ENCODE measurements at regions of chr15 and their contacts with region 1.

Region 1: DNA sequence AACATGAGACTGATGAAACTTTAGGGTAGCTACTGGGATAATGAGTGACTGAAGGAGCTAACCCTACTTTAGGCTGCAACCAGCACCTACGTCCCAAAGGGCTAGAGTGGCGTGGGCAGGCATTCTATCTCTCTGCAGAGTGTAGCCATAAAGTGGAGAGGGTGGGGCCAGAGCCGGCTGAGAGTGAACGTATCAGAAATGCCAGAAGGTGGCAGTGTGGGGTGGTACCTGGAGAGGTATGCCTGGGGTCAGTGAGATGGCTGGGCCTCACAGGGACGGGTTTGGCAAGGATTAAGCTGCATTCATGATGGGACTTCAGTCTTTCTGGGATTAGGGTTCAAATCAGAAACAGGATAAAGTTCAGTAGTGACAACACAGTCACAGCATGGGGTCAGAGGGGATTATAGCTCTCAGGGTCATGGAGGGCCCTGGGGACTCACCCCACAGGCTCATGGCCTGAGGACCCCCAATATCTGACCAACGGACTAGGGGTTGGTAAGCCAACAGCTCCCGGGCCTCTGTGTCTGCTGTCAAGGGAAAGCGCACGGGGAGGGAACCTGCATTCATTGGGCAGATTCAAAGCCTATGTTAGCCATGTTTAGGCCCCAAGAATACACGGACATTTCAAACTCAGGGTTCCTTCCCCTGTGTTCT is 86.5 kb upstream of the FOXB1 start:
- DNase-seq: peak; percentile 86
- H3K4me3 Mint-ChIP-seq: no peak overlapping the region
- H3K27ac Mint-ChIP-seq: no peak overlapping the region
- H3K4me1 Mint-ChIP-seq: peaks cover 28% of the 10 kb centered on the region
- H3K27me3 Mint-ChIP-seq: peaks cover 3% of the 10 kb centered on the region

Region 2: DNA sequence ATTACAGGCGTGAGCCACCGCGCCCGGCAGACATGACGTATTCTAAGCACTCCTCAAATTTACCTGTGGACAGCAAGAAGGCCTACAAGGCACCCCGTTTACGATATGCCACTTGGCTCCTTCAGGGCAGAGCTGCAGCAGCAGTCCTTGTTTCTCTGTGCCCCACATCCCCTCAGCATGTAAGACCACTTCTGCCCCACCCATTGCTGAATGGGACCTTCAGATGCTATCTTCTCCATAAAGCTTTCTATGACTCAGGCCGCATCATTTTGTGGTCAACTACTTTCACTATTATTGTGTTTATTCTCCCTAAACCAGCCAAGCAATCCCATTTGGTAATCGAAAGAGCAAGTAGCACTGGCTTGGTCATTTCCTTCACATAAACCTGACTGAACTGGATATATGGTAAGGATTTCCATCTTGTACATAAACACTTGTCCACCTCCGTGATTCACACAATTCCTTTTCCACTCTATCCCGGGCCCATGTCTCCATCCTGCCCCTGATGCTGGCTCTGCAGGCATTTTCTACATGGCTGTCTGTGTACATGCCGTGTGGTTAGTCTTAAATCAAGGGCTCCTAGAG is 1460.2 kb before region 1 on chr15:
- CTCF ChIA-PET with region 1: no interaction called
- intact Hi-C with region 1: no loop called
- DNase-seq: peak; percentile 34
- H3K4me3 Mint-ChIP-seq: no peak overlapping the region
- H3K27ac Mint-ChIP-seq: no peak overlapping the region
- H3K4me1 Mint-ChIP-seq: peaks cover 58% of the 10 kb centered on the region
- H3K27me3 Mint-ChIP-seq: no peaks in the 10 kb centered on the region

Region 3: GRCh38 chr15:59656897-59657634 is 260.6 kb before region 1 on chr15 and contains the start of gene GTF2A2:
- CTCF ChIA-PET with region 1: no interaction called
- intact Hi-C with region 1: loop called (anchors 1 kb)
- DNase-seq: peak; percentile 96
- H3K4me3 Mint-ChIP-seq: peak within 1 kb of the TSS; percentile 28
- H3K27ac Mint-ChIP-seq: peak within 1 kb of the TSS; percentile 61
- H3K4me1 Mint-ChIP-seq: peaks cover 10% of the 10 kb centered on the region
- H3K27me3 Mint-ChIP-seq: no peaks in the 10 kb centered on the region
- total RNA-seq, gene GTF2A2: 146 to 155 TPM

Region 4: GRCh38 chr15:59751552-59752413 is 165.8 kb before region 1 on chr15:
- CTCF ChIA-PET with region 1: interaction called, 8 read pairs
- intact Hi-C with region 1: loop called (anchors 2 kb)
- DNase-seq: no peak
- H3K4me3 Mint-ChIP-seq: no peak overlapping the region
- H3K27ac Mint-ChIP-seq: no peak overlapping the region
- H3K4me1 Mint-ChIP-seq: peaks cover 12% of the 10 kb centered on the region
- H3K27me3 Mint-ChIP-seq: no peaks in the 10 kb centered on the region

Region 5: DNA sequence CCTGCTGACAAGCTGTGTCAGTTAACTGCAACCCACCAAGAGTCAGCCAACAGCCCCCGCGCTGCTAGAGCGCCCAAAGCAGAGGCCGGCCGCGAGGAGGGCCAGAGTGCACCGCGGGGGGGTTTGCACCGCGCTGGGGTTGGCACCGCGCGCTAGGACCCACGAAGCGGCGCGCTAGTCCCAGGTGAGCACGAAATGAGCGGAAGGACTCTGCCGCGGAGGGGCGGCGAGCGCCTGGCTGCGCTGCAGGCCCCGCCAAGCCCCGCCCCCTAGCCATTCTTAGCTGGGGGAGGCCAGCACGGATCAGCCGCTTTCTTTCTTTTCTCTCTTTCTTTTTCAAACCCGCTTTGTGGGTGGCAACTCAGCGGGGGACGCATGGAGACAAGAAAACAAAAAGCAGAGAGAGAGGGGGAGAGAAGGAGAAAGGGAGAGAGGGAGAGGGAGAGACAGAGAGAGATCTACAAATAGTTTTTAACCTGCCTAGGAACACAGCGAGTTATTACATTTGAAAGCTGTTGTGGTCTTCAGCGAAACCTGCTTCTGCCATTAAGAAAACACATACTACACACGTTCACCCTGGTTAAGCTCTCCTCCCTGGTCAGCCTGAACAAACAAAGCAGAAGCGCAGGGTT is 79.6 kb after region 1 on chr15:
- CTCF ChIA-PET with region 1: interaction called, 7 read pairs
- intact Hi-C with region 1: loop called (anchors 2 kb)
- DNase-seq: peak; percentile 69
- H3K4me3 Mint-ChIP-seq: peak overlapping the region; percentile 55
- H3K27ac Mint-ChIP-seq: no peak overlapping the region
- H3K4me1 Mint-ChIP-seq: peaks cover 40% of the 10 kb centered on the region
- H3K27me3 Mint-ChIP-seq: peaks cover 87% of the 10 kb centered on the region

Region 6: DNA sequence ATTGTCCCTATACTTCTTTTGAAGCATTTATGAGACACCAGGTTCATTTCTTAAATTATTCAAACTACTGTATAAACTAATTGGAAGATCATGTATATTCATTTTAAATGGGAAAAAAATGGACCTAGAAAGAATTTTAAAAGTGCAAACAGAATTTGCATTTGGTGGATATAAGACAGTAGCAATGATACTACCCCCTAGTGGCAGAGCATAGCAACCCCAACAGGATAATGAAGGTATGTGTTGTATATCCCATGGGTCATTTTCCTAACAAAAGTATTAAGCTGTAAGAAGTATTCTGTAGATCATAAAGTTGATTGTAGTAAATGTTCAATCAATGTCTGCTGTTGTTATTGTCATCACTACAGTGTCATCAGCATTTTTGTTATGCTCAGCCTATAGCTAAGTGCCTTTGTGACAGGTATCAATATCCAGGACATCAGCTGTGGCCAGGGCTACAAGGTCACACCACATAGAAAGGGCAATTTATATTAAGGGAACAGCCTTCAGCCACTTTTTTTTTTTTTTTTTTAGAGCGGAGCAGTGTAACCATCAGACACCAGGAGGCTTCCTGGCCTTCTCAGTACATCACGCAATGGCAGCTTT is 262.3 kb after region 1 on chr15:
- CTCF ChIA-PET with region 1: interaction called, 41 read pairs
- intact Hi-C with region 1: loop called (anchors 1 kb)
- DNase-seq: peak; percentile 49
- H3K4me3 Mint-ChIP-seq: no peak overlapping the region
- H3K27ac Mint-ChIP-seq: no peak overlapping the region
- H3K4me1 Mint-ChIP-seq: no peaks in the 10 kb centered on the region
- H3K27me3 Mint-ChIP-seq: peaks cover under 1% of the 10 kb centered on the region

Region 7: DNA sequence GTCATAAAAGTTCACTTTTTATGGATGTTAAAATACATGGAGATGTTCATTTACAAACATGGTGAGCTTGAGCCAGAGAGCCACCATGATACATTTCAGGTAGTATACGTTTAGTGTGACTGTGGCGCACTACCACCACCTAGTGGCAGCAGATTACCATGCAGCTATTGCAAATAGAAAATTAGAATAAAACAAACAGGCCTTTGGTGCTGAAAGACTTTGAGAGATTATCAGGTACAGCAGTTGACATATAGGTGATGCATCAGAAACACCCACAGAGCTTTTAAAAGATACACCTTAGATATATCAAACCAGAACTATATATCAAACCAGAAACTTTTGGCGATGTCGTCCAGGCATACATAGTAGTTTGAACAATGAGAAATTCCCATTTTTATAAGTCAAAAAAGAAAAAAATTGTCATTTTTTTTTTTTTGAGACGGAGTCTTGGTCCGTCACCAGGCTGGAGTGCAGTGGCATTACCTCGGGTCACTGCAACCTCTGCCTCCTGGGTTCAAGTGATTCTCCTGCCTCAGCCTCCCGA is 603.3 kb after region 1 on chr15:
- CTCF ChIA-PET with region 1: no interaction called
- intact Hi-C with region 1: loop called (anchors 2 kb)
- DNase-seq: peak; percentile 91
- H3K4me3 Mint-ChIP-seq: no peak overlapping the region
- H3K27ac Mint-ChIP-seq: peak overlapping the region; percentile 42
- H3K4me1 Mint-ChIP-seq: peaks cover 42% of the 10 kb centered on the region
- H3K27me3 Mint-ChIP-seq: no peaks in the 10 kb centered on the region

Measured in activated naive CD4-positive, alpha-beta T cell treated with anti-CD3 and anti-CD28 coated beads for 36 hours (primary cell).